Activated T-helper 2 cell treated with anti-CD3 and anti-CD28 coated beads, Interferon-gamma antibody, Interleukin-2, Interleukin-4, amounts not matched to agents 10 μg/mL and 5 μg/mL and 100 μg/mL, durations not matched to agents 14 hours and 24 hours and 36 hours (primary cell): ENCODE measurements at regions of chr2 and their contacts with region 1.

Region 1: GRCh38 chr2:179218848-179219594 is 45.6 kb downstream of the SESTD1 start:
- DNase-seq: peak; percentile 11
- H3K4me3 Mint-ChIP-seq: no peak overlapping the region
- H3K27ac Mint-ChIP-seq: no peak overlapping the region
- H3K4me1 Mint-ChIP-seq: no peaks in the 10 kb centered on the region
- H3K27me3 Mint-ChIP-seq: peaks cover 3% of the 10 kb centered on the region

Region 2: GRCh38 chr2:178761759-178762371 is 457.2 kb before region 1 on chr2:
- intact Hi-C with region 1: loop called (anchors 10 kb)
- DNase-seq: no peak
- H3K4me3 Mint-ChIP-seq: no peak overlapping the region
- H3K27ac Mint-ChIP-seq: no peak overlapping the region
- H3K4me1 Mint-ChIP-seq: peaks cover 12% of the 10 kb centered on the region
- H3K27me3 Mint-ChIP-seq: no peaks in the 10 kb centered on the region

Region 3: GRCh38 chr2:179253226-179253625 is 34.2 kb after region 1 on chr2:
- intact Hi-C with region 1: no loop called
- DNase-seq: no peak
- H3K4me3 Mint-ChIP-seq: no peak overlapping the region
- H3K27ac Mint-ChIP-seq: no peak overlapping the region
- H3K4me1 Mint-ChIP-seq: peaks cover 51% of the 10 kb centered on the region
- H3K27me3 Mint-ChIP-seq: peaks cover 4% of the 10 kb centered on the region

Region 4: GRCh38 chr2:179264368-179265081 is 45.5 kb after region 1 on chr2 and contains the start of gene SESTD1:
- intact Hi-C with region 1: loop called (anchors 5 kb)
- DNase-seq: peak; percentile 61
- H3K4me3 Mint-ChIP-seq: peak within 1 kb of the TSS; percentile 86
- H3K27ac Mint-ChIP-seq: peak within 1 kb of the TSS; percentile 74
- H3K4me1 Mint-ChIP-seq: peaks cover 18% of the 10 kb centered on the region
- H3K27me3 Mint-ChIP-seq: peaks cover 36% of the 10 kb centered on the region
- total RNA-seq, gene SESTD1: 9.8 and 14.3 TPM in 2 replicates

Region 5: DNA sequence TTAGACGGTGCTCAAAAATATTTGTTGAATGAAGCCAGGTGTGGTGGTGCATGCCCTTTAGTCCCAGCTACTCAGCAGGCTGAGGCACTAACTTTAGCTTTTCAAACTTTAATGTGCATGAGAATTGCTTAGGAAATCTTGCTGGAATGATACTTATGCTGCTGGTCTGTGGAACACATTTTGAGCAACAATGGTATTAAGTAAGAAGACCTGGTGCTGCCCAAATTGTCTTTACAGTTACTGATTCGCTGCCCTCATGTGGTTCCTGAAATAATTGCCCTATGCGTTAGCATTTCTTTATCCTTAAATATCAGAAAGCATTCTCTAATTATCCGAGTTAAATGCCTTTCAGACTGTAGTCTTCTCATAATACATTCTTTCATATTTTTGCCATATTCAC is 121.6 kb after region 1 on chr2:
- intact Hi-C with region 1: loop called (anchors 1 kb)
- DNase-seq: no peak
- H3K4me3 Mint-ChIP-seq: no peak overlapping the region
- H3K27ac Mint-ChIP-seq: no peak overlapping the region
- H3K4me1 Mint-ChIP-seq: no peaks in the 10 kb centered on the region
- H3K27me3 Mint-ChIP-seq: no peaks in the 10 kb centered on the region

Region 6: GRCh38 chr2:179440642-179441251 is 221.7 kb after region 1 on chr2:
- intact Hi-C with region 1: loop called (anchors 1 kb)
- DNase-seq: no peak
- H3K4me3 Mint-ChIP-seq: no peak overlapping the region
- H3K27ac Mint-ChIP-seq: no peak overlapping the region
- H3K4me1 Mint-ChIP-seq: no peaks in the 10 kb centered on the region
- H3K27me3 Mint-ChIP-seq: peaks cover 13% of the 10 kb centered on the region

Region 7: GRCh38 chr2:179751163-179751809 is 532.3 kb after region 1 on chr2:
- intact Hi-C with region 1: loop called (anchors 5 kb)
- DNase-seq: no peak
- H3K4me3 Mint-ChIP-seq: no peak overlapping the region
- H3K27ac Mint-ChIP-seq: no peak overlapping the region
- H3K4me1 Mint-ChIP-seq: no peaks in the 10 kb centered on the region
- H3K27me3 Mint-ChIP-seq: peaks cover 2% of the 10 kb centered on the region